AG04449 (cell line): ENCODE measurements at regions of chr6 and their contacts with region 1.

Region 1: DNA sequence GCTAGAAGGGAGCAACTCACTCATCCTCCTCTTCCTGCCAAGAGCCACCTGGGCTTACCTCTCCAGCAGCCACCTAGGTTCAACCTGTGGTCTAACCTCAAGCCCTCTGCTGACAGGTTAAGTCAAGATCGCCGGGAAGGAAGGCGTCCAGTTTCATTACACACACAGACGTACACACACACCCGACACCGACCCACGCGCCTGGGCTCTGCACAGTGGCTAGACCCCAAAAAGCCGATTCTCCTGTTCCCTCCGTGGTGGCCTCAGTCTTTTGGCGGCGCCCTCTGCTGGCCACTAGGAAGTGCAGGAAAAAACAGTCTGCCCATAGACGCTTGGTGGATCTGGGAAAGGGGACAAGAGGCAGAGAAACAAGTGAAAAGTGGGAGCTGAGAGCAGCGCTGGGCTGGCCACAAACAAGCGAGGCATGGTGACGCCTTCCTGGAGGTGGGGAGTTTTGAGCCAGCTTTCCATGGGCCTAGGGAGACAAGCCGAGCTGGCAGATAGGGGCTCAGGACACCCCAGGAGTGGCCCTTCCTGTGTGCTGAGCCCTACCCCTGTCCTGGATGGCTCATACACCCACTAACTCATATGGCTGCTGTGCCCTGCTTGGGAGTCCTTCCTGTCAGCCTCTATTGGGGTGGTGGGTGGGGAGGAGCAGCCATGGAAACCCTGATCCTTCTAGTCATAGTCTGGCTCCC is 52.7 kb downstream of the MRPL14 start:
- DNase-seq: no peak
- H3K4me3 ChIP-seq: no peak overlapping the region
- CTCF ChIP-seq: peak; percentile 92

Region 2: GRCh38 chr6:43644931-43645612 is 429.5 kb before region 1 on chr6 and contains the start of gene RSPH9:
- CTCF ChIA-PET with region 1: interaction called, 10 read pairs
- POLR2A ChIA-PET with region 1: no interaction called
- DNase-seq: no peak
- H3K4me3 ChIP-seq: peak within 1 kb of the TSS; percentile 57
- CTCF ChIP-seq: no peak

Region 3: GRCh38 chr6:43758617-43759050 is 316.0 kb before region 1 on chr6:
- CTCF ChIA-PET with region 1: interaction called, 23 read pairs
- POLR2A ChIA-PET with region 1: no interaction called
- DNase-seq: no peak
- H3K4me3 ChIP-seq: no peak overlapping the region
- CTCF ChIP-seq: peak; percentile 65

Region 4: DNA sequence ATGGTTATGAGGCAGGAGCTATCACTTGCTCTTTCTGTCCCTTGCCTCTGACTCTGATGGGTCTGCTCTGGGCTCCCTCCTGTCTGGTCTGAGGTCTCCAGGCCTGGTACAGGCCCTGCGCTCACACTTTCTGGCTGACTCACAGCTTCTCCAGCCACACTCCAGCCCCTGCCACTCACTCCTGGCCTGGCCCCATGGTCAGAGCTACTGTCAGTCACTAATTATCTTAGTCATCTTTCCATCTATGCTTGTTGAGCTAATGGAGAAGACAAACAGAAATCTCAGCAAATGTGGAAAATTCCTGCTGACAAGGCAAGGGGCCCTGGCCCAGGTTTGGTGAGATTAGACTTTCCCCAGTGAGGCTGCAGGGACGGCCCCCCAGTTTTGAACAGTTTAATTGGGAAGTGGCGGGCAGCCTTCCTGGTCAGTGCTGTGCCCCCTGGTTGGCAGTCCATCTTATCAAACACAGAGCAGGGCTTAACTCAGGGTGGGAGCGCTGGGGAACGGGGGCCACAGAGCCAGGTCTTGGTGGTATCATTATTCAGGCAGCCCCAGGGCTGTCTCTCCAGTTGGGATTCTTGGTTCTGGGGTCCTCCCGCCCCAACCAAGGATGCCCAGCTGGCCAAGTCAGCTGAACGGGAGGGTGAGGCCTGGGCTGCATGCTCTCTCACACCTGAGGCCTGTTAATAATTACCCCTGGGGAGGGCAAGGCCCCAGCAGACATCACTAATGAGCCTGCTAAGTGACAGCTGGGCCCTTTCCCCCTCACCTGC is 241.2 kb before region 1 on chr6:
- CTCF ChIA-PET with region 1: interaction called, 11 read pairs
- POLR2A ChIA-PET with region 1: no interaction called
- DNase-seq: no peak
- H3K4me3 ChIP-seq: no peak overlapping the region
- CTCF ChIP-seq: no peak

Region 5: GRCh38 chr6:43933148-43933885 is 141.3 kb before region 1 on chr6:
- CTCF ChIA-PET with region 1: interaction called, 28 read pairs
- POLR2A ChIA-PET with region 1: no interaction called
- DNase-seq: no peak
- H3K4me3 ChIP-seq: no peak overlapping the region
- CTCF ChIP-seq: no peak

Region 6: GRCh38 chr6:44010411-44011349 is 63.9 kb before region 1 on chr6:
- CTCF ChIA-PET with region 1: interaction called, 69 read pairs
- POLR2A ChIA-PET with region 1: interaction called, 25 read pairs
- DNase-seq: peak; percentile 99
- H3K4me3 ChIP-seq: no peak overlapping the region
- CTCF ChIP-seq: no peak

Region 7: GRCh38 chr6:44064089-44064947 is 10.3 kb before region 1 on chr6:
- CTCF ChIA-PET with region 1: interaction called, 46 read pairs
- POLR2A ChIA-PET with region 1: interaction called, 8 read pairs
- DNase-seq: peak; percentile 95
- H3K4me3 ChIP-seq: no peak overlapping the region
- CTCF ChIP-seq: no peak

Region 8: GRCh38 chr6:44353336-44353735 is 278.7 kb after region 1 on chr6:
- CTCF ChIA-PET with region 1: no interaction called
- POLR2A ChIA-PET with region 1: no interaction called
- DNase-seq: no peak
- H3K4me3 ChIP-seq: no peak overlapping the region
- CTCF ChIP-seq: no peak